Breast epithelium (tissue), 4 donors: ENCODE measurements at regions of chr1 and their contacts with region 1.

Region 1: GRCh38 chr1:205920159-205920558 is 23.1 kb downstream of the SLC26A9 start:
- DNase-seq: no peak
- H3K4me3 ChIP-seq: no peak overlapping the region
- H3K27ac ChIP-seq: no peak overlapping the region
- H3K4me1 ChIP-seq: no peaks in the 10 kb centered on the region
- H3K27me3 ChIP-seq: no peaks in the 10 kb centered on the region
- CTCF ChIP-seq: no peak
- POLR2A ChIP-seq: no peak

Region 2: GRCh38 chr1:205940710-205941109 is 20.6 kb after region 1 on chr1:
- intact Hi-C with region 1: loop called (anchors 1 kb)
- DNase-seq: no peak
- H3K4me3 ChIP-seq: no peak overlapping the region
- H3K27ac ChIP-seq: no peak overlapping the region
- H3K4me1 ChIP-seq: no peaks in the 10 kb centered on the region
- H3K27me3 ChIP-seq: peaks cover 0 to 60% of the 10 kb centered on the region in 2 donors
- CTCF ChIP-seq: no peak
- POLR2A ChIP-seq: no peak

Region 3: GRCh38 chr1:205977402-205978014 is 57.3 kb after region 1 on chr1:
- intact Hi-C with region 1: loop called (anchors 2 kb)
- DNase-seq: peak; percentile 57 to 69
- H3K4me3 ChIP-seq: no peak overlapping the region
- H3K27ac ChIP-seq: no peak overlapping the region
- H3K4me1 ChIP-seq: no peaks in the 10 kb centered on the region
- H3K27me3 ChIP-seq: peaks cover 0 to 4% of the 10 kb centered on the region in 2 donors
- CTCF ChIP-seq: peak; percentile 89 to 95 (median 93)
- POLR2A ChIP-seq: no peak